A549 (cell line): ENCODE measurements at regions of chr22 and their contacts with region 1.

Region 1: GRCh38 chr22:31148953-31149627 is 8.8 kb upstream of the PLA2G3 start:
- DNase-seq: peak; percentile 72 to 75
- ATAC-seq: peak; percentile 98 to 99
- H3K4me3 ChIP-seq: no peak overlapping the region
- H3K27ac ChIP-seq: 0 out of 6 replicates have a peak overlapping the region, but pooled peaks of 1 of the 2 experiments have one; percentile 0
- H3K4me1 ChIP-seq: no peaks in the 10 kb centered on the region
- CTCF ChIP-seq: peak; percentile 90
- EP300 ChIP-seq: no peak
- POLR2A ChIP-seq: no peak
- RAD21 ChIP-seq: peak; percentile 91 to 92

Region 2: GRCh38 chr22:30947816-30948454 is 201.2 kb before region 1 on chr22:
- CTCF ChIA-PET with region 1: interaction called, 10 read pairs
- POLR2A ChIA-PET with region 1: no interaction called
- DNase-seq: peak in 1 of 2 experiments; percentile 46
- ATAC-seq: peak; percentile 50 to 53; a peak in 2 of 6 replicates
- H3K4me3 ChIP-seq: no peak overlapping the region
- H3K27ac ChIP-seq: no peak overlapping the region
- H3K4me1 ChIP-seq: no peaks in the 10 kb centered on the region
- CTCF ChIP-seq: peak; percentile 59
- EP300 ChIP-seq: no peak
- POLR2A ChIP-seq: no peak
- RAD21 ChIP-seq: peak; percentile 57 to 67; a peak in 4 of 5 replicates

Region 3: DNA sequence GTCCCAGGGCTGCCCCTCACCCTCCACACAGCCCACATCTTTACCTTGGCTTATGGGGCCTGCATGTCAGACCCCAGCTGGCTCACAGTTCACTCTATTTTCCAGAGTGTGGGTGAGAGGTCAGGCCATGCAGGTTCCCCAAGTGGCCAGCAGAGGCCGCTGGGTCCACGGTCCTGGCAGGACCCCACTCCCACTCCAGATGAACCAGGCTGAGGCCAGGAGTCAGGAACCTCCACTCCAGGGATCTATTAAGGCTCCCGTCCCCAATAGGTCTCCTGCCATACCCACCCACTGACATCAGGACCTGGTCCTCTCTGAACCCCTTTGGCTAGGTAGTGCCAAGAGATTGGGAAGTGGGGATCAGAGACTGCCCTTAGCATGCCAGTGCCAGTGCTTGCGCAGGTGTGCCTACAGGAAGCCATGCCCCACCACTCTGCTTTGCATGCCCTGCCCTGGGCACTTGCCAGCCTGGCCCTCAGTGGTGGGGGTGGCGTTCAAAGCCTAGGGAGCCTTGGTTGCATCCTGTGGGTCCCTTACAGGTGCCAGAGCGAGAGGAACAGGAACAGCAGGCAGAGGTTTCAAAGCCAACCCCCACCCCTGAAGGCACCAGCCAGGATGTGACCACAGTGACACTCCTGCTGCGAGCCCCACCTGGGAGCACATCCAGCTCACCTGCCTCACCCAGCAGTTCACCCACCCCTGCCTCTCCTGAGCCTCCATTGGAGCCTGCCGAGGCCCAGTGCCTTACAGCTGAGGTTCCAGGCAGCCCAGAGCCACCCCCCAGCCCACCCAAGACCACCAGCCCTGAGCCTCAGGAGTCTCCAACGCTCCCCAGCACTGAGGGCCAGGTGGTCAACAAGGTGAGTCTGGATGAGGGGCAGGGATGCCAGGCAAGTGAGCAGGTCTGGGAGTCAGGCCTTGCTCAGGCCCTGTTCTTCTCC is 59.7 kb before region 1 on chr22:
- CTCF ChIA-PET with region 1: interaction called, 50 read pairs
- POLR2A ChIA-PET with region 1: no interaction called
- DNase-seq: peak in 1 of 2 experiments; percentile 31
- ATAC-seq: peak; percentile 47 to 67; a peak in 4 of 6 replicates
- H3K4me3 ChIP-seq: no peak overlapping the region
- H3K27ac ChIP-seq: no peak overlapping the region
- H3K4me1 ChIP-seq: 0 out of 3 replicates have a peak, but pooled peaks cover 4% of the 10 kb centered on the region
- CTCF ChIP-seq: peak; percentile 63
- EP300 ChIP-seq: no peak
- POLR2A ChIP-seq: no peak
- RAD21 ChIP-seq: peak; percentile 63 to 65

Region 4: DNA sequence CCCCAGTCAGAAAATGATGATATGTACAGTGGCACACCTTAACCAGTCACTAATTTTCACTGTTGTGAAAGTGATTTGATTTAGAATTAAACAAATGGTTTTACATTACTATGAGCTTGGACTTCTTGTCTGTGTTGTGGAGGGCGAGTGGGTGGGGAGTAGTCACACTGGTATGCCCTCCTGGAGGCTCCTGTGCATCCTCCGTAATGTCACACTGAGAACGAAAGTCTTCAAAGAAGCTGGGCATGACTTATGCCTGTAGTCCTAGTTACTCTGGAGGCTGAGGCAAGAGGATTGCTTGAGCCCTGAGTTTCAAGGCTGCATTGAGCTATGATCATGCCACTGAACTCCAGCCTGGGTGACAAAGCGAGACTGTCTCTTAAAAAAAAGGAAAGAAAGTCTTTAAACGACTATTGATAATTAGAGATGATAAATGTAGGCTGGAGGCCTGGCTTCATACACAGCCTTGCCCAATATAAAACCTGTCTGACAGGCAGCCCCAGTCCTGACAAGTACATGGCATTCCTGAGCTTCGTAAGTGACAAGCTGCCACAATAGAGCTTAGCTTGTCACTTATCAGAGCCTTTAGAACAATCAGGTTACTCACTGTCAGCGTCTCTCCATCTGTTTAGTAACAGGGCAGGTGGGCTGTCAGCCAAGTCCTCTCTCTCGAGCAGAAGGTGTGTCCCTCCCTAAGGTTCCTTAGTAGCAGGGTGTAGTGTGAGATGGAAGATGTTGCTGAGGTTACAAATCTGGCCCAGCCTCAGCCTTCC is 58.0 kb after region 1 on chr22:
- CTCF ChIA-PET with region 1: no interaction called
- POLR2A ChIA-PET with region 1: no interaction called
- DNase-seq: no peak
- ATAC-seq: no peak
- H3K4me3 ChIP-seq: no peak overlapping the region
- H3K27ac ChIP-seq: no peak overlapping the region
- H3K4me1 ChIP-seq: no peaks in the 10 kb centered on the region
- CTCF ChIP-seq: no peak
- EP300 ChIP-seq: no peak
- POLR2A ChIP-seq: no peak
- RAD21 ChIP-seq: no peak